ENCODE measurements at regions of chr19 and their contacts with region 1.

Region 1: GRCh38 chr19:57002710-57003109 is 117.1 kb upstream of the USP29 start:
- DNase-seq: peak in 2 of 7 donors; percentile 39 to 63
- H3K4me3 ChIP-seq: no peak overlapping the region
- H3K27ac ChIP-seq: peak overlapping the region in 2 of 5 donors; percentile 73 to 89
- H3K4me1 ChIP-seq: peaks cover 0 to 18% of the 10 kb centered on the region in 2 donors
- H3K27me3 ChIP-seq: no peaks in the 10 kb centered on the region
- CTCF ChIP-seq: no peak
- POLR2A ChIP-seq: no peak

Region 2: GRCh38 chr19:57057036-57057686 is 54.5 kb after region 1 on chr19:
- intact Hi-C with region 1: loop called in 1 of 2 experiments (anchors 10 kb)
- DNase-seq: peak; percentile 51 to 83 (median 79)
- H3K4me3 ChIP-seq: peak overlapping the region in 1 of 4 donors; percentile 39
- H3K27ac ChIP-seq: peak overlapping the region in 1 of 5 donors; percentile 49
- H3K4me1 ChIP-seq: peaks cover 0 to 7% of the 10 kb centered on the region in 2 donors
- H3K27me3 ChIP-seq: no peaks in the 10 kb centered on the region
- CTCF ChIP-seq: no peak
- POLR2A ChIP-seq: no peak